GM23248 (cell line): ENCODE measurements at regions of chr12 and their contacts with region 1.

Region 1: DNA sequence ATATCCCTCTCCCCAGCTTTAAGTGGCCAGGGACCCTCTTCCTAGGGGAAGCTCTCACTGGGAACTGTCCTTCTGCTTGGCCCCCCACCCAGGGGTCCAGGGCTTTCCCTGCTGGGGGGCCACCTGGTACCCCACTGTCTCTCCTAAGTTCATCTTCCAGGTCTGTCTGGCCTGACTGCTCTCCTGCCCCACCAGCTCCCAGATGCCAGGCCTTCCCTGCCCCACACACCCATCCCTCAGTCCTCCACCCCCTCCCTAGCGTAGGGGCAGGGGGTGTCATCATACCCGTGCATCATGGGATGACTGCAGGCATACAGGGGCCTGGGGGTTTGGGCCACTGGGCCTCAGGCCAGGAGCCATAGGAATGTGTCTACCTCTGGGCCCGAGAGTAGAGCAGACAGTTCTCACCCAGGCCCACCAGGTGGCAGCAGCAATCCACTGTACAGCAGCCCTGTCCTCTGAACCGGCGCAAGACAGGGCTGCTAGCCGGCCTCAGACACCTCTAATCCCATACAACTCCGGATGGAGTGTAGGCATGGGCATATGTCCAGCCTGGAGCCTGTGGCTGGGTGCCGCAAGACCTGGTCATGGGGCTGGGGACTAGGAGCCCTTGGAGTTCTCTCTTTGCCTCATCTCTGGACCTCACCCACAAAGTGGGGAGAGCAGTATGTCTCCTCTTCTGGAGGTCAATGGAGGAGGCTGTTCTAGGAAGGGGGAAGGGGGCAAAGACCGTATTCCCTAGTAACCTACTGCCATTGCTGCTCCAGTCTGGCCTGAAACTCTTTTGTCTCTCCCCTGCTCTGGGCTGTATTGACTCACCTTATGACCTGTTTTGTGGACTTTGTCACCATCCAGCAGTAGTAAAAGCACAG is 10.0 kb upstream of the SMARCD1 start:
- DNase-seq: peak; percentile 89
- H3K4me3 ChIP-seq: no peak overlapping the region
- H3K27ac ChIP-seq: no peak overlapping the region
- H3K4me1 ChIP-seq: no peaks in the 10 kb centered on the region
- H3K27me3 ChIP-seq: no peaks in the 10 kb centered on the region

Region 2: DNA sequence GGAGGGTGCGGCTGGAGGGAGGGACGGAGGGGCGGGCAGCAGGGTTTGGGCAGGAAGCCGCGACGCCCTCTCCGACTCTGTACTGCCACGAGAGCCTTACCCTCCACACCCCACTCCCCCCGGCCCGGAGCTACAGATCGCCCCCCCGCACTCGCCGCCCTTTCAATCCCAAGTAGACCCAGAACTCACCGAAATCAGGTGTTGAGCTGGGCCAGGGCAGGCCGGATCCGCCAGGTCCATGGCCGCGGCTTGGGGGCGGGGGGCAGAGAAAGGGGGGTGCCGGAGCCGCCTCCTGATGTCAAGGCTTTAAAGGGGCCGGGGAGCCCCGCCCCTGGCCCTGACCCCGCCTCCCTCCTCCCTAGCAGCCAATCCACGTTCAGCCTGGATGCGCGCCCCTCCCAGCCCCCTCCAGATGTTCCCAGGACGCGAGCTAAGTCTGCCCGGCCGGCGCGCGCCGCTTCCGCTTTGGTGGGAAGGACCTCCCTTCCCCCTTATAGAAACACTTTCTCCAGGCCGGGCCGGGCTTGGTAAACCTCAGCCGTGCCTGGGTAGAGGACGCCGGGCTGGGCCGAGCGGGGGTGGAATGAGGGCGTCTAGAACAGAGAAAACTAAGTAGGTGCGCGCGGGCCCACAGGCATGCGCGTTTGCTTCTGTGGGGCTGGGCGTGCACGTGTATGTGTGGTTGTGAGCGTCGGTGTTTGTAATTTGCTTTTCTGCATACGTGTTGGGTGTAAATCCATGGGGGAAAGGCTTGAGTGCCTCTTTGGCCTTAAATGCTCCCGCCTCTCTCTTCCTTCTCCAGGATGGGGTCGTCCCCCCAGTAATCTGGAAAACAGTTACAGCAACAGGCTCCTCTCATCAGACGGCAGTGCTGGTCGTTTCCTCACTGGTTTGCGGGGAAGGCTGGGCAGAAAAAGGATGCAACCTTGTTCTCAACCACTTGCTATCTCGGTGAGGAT is 246.8 kb before region 1 on chr12 and contains the start of gene NCKAP5L:
- in situ Hi-C with region 1: no loop called
- DNase-seq: peak; percentile 98
- H3K4me3 ChIP-seq: peak within 1 kb of the TSS; percentile 90
- H3K27ac ChIP-seq: peak within 1 kb of the TSS; percentile 93
- H3K4me1 ChIP-seq: peaks cover 48% of the 10 kb centered on the region
- H3K27me3 ChIP-seq: no peaks in the 10 kb centered on the region
- total RNA-seq, gene NCKAP5L: 28.4 and 28.8 TPM in 2 replicates

Region 3: DNA sequence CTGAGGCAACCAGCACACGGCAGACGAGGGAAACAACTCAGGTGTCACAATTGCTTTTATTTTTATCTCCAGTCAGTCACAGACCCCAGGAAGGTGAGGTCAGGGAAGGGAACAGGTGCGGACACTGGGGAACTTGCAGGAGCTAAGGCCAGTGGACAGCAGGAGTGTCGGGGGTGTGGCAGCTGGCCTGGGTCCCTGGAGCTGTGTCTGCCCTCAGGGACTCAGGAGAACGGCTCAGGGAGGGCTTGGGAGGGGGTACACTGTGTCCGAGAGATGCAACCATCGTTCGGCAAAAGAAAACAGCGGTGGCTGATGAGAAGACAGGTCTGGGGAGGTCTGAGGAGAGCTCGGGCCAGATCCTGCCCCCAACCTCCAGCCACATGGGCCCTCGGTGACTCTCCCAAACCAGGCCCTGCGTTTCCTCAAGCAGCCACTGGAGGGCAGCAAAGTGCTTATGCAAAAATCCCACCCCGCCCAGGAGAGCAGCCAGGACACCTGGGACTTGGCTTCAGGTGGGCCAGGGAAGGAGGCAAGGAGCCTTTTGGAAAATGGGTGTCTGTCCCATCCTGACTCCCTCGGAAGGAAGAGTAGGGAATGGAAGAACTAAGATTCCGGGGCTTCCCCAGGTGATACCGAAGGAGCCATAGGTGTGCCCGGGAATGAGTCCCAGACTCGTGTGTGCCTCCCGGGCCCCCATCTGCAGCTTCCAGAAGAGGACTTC is 208.2 kb before region 1 on chr12:
- in situ Hi-C with region 1: loop called (anchors 25 kb)
- DNase-seq: peak; percentile 69
- H3K4me3 ChIP-seq: no peak overlapping the region
- H3K27ac ChIP-seq: no peak overlapping the region
- H3K4me1 ChIP-seq: peaks cover 7% of the 10 kb centered on the region; the same call in 1 of the 2 replicates
- H3K27me3 ChIP-seq: 0 out of 2 replicates have a peak, but pooled peaks cover 5% of the 10 kb centered on the region